ENCODE measurements at regions of chr5 and their contacts with region 1.

Region 1: DNA sequence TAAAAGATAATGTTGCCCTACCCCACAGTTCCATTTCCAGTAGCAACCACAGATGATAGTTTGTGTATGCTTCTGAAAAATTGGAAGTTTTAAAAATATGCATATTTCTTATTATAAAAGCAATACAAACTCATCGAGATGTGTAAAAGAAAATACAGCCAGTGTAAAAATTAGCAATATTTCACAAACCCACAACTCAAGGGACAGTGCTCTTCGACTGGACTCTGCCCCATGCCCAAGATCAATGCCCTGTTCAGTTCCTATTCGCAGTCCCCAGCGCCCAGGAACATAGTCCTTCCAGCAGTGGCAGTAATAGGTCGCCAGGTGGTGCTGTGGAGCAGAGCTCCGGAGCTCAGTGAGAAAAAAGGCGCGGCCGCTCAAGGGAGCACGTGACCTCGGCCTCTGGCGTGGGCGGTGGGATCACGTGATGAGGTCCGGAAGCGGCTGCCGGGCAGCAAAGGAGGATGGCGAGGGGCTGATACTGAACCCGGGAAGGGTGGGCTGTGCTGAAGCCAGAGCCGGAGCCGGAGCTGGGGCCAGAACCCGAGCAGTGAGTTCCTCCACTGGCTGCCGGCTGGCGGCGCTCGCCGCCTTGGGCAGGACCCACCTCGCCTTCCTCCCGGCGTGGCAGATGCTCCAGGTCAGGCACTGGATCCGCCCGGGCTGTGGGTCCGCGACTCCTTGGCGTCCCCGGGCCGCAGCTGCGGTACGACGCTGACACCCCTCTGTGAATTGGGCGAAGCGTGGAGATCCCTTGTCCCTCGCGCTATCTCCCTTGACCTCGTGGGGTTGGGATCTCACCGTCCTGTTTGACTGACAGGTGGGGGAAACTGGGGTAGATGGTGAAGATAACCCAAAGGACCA is at the start of gene SLC36A1:
- DNase-seq: peak; percentile 94
- CTCF ChIP-seq: peak; percentile 92

Region 2: GRCh38 chr5:151427258-151427657 is 20.1 kb before region 1 on chr5:
- CTCF ChIA-PET with region 1: interaction called, 31 read pairs
- POLR2A ChIA-PET with region 1: no interaction called
- DNase-seq: peak; percentile 88
- CTCF ChIP-seq: no peak

Region 3: GRCh38 chr5:151463137-151464029 is 16.0 kb after region 1 on chr5:
- CTCF ChIA-PET with region 1: interaction called, 87 read pairs
- POLR2A ChIA-PET with region 1: no interaction called
- DNase-seq: no peak
- CTCF ChIP-seq: peak; percentile 34

Region 4: GRCh38 chr5:151499501-151500035 is 52.2 kb after region 1 on chr5:
- CTCF ChIA-PET with region 1: interaction called, 62 read pairs
- POLR2A ChIA-PET with region 1: no interaction called
- DNase-seq: no peak
- CTCF ChIP-seq: no peak

Region 5: DNA sequence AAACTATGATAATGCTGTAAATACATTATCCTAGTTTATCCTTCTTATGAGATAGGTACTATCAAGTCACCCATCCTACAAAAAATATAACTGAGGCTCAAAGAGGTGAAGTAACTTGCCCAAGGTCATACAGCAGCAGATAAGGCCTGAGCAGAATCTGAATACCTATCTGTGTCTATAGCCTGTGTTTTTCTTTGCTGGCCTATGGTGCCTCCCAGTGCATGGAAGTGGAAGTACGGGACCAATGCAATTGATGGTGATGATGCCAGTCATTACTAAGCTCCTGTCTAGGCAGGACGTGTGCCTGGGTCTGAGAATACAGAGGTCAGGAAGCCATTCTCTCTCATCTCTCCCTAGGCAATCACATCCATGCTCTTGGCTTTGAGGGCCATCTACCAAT is 75.9 kb after region 1 on chr5:
- CTCF ChIA-PET with region 1: interaction called, 21 read pairs
- POLR2A ChIA-PET with region 1: no interaction called
- DNase-seq: peak; percentile 75
- CTCF ChIP-seq: peak; percentile 54

Region 6: DNA sequence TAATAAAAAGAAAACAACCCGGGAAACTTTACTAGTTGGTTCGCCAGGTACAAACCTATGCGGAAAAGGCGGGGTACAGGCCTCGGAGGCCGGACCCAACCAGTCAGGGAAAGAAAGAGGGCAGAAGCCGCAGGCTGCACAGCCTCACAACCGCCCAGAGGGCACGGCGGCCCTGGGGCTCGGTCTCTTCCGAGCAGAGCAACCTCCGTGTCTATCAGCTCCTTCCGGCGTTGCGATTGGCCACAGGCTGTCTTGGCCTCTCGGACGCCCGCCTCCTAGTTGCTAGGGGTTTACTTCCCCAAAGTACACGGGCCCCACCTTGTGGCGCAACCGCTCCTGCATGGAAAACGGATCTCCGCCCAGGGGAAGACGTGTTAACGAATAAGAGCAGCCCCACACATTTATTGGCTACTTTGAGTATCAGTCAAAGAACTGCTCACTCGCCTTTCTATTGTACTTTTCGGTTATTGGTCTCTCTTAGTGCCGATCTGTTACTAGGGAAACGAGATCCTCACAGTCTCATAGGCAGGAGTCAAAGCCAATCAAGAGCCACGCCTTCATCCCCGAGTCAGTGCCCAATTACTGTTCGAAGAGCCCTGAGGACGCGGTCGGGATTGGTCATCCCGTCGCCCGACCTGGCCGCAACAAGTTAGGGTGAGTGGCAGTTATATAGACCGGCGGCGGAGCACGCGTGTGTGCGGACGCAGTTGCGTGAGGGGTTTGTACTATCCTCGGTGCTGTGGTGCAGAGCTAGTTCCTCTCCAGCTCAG is 324.0 kb after region 1 on chr5 and contains the start of gene G3BP1:
- CTCF ChIA-PET with region 1: interaction called, 14 read pairs
- POLR2A ChIA-PET with region 1: no interaction called
- DNase-seq: peak; percentile 97
- CTCF ChIP-seq: peak; percentile 68

Measured in GM10248 (cell line).